T-cell (primary cell): ENCODE measurements at regions of chr1 and their contacts with region 1.

Region 1: DNA sequence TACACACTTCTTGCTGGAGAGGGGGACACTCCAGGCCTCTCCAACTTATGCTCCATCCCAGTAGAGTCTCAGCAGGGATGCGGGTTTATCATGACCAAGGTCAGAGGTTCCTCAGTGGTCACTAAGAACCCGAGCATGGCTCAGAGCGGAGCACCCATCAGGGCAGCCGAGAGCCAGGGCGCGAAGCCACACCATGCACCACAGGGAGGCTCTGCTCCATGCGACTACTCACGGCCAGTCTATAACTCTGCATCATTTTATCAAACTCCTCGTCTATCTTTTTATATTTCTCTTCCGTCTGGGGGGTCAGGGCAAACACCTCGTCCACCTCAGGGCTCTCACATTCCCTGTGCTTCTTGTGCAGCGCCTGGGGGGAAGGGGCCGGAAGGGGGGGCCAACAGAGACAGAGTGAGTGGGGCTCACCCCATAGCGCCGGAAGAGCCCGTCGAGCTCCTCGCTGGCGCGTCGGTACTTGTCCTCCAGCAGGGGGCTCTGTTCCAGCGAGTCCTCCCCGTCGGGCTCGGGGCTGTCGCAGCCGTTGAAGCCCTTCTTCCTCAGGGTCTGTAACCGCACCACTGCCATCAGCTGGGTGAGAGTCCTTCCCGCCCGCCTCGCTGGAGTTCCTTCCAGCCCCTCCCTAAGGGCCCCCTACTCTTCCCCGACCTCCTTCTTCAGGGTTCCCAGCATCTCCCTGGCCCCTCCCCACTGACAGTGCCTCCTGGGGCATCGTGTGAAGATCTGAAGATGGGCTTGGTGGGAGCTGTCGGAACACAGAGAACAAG is 20.0 kb downstream of the MEF2D start:
- DNase-seq: peak; percentile 58 to 87 (median 76)
- ATAC-seq: peak; percentile 80 to 87 (median 85)
- H3K4me3 ChIP-seq: no peak overlapping the region
- H3K4me3 Mint-ChIP-seq: peak overlapping the region in 1 of 3 donors; percentile 45
- H3K27ac ChIP-seq: peak overlapping the region; percentile 39
- H3K27ac Mint-ChIP-seq: peak overlapping the region; percentile 64 to 77
- H3K4me1 ChIP-seq: peaks cover 2 to 54% of the 10 kb centered on the region in 2 experiments
- H3K4me1 Mint-ChIP-seq: peaks cover 45 to 52% (median 51%) of the 10 kb centered on the region in 3 donors
- H3K27me3 ChIP-seq: no peaks in the 10 kb centered on the region
- H3K27me3 Mint-ChIP-seq: no peaks in the 10 kb centered on the region

Region 2: GRCh38 chr1:155504207-155504606 is 976.4 kb before region 1 on chr1:
- CTCF ChIA-PET with region 1: no interaction called
- POLR2A ChIA-PET with region 1: no interaction called
- DNase-seq: peak in 3 of 35 experiments; percentile 4 to 51 (median 7)
- ATAC-seq: peak in 1 of 4 experiments; percentile 45
- H3K4me3 ChIP-seq: no peak overlapping the region
- H3K4me3 Mint-ChIP-seq: no peak overlapping the region
- H3K27ac ChIP-seq: no peak overlapping the region
- H3K27ac Mint-ChIP-seq: peak overlapping the region in 1 of 2 donors; percentile 1
- H3K4me1 ChIP-seq: peaks cover 11% of the 10 kb centered on the region in 2 experiments
- H3K4me1 Mint-ChIP-seq: peaks cover 49 to 57% (median 52%) of the 10 kb centered on the region in 3 donors
- H3K27me3 ChIP-seq: no peaks in the 10 kb centered on the region
- H3K27me3 Mint-ChIP-seq: no peaks in the 10 kb centered on the region

Region 3: GRCh38 chr1:156456622-156457465 is 23.8 kb before region 1 on chr1:
- CTCF ChIA-PET with region 1: interaction called, 3 to 9 read pairs
- POLR2A ChIA-PET with region 1: interaction called in 1 of 2 experiments, 10 read pairs
- DNase-seq: peak; percentile 85 to 99 (median 96)
- ATAC-seq: peak; percentile 83 to 88 (median 85)
- H3K4me3 ChIP-seq: peak overlapping the region; percentile 74 to 77
- H3K4me3 Mint-ChIP-seq: peak overlapping the region; percentile 87 to 89 (median 88)
- H3K27ac ChIP-seq: peak overlapping the region; percentile 97
- H3K27ac Mint-ChIP-seq: peak overlapping the region; percentile 94 to 98
- H3K4me1 ChIP-seq: peaks cover 4 to 19% of the 10 kb centered on the region in 2 experiments
- H3K4me1 Mint-ChIP-seq: peaks cover 14 to 22% (median 19%) of the 10 kb centered on the region in 3 donors
- H3K27me3 ChIP-seq: no peaks in the 10 kb centered on the region
- H3K27me3 Mint-ChIP-seq: no peaks in the 10 kb centered on the region

Region 4: DNA sequence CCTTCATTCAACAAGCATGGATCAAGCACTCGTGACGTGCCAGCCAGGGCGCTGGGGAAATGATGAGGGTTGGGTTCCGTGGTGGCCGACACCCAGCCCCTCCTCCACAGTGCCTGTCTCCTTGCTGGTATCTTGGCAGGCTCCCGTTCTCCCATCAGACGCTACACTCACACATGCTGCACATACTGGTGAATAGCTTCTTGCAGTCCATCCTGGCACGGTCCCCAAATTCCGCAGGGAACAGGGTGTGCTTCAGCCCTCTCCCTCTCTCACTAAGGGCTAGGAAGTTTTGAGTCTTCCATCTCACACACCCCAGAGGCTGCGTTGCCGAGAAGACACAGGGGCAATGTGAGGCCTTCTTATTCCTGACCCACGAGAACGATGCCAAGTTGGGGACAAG is 30.1 kb after region 1 on chr1:
- CTCF ChIA-PET with region 1: interaction called, 6 to 13 read pairs
- POLR2A ChIA-PET with region 1: interaction called, 9 to 11 read pairs
- DNase-seq: no peak
- ATAC-seq: no peak
- H3K4me3 ChIP-seq: no peak overlapping the region
- H3K4me3 Mint-ChIP-seq: no peak overlapping the region
- H3K27ac ChIP-seq: no peak overlapping the region
- H3K27ac Mint-ChIP-seq: peak overlapping the region in 1 of 2 donors; percentile 22
- H3K4me1 ChIP-seq: peaks cover 18 to 26% of the 10 kb centered on the region in 2 experiments
- H3K4me1 Mint-ChIP-seq: peaks cover 30 to 37% (median 34%) of the 10 kb centered on the region in 3 donors
- H3K27me3 ChIP-seq: peaks cover 0 to 5% of the 10 kb centered on the region in 2 experiments
- H3K27me3 Mint-ChIP-seq: no peaks in the 10 kb centered on the region

Region 5: DNA sequence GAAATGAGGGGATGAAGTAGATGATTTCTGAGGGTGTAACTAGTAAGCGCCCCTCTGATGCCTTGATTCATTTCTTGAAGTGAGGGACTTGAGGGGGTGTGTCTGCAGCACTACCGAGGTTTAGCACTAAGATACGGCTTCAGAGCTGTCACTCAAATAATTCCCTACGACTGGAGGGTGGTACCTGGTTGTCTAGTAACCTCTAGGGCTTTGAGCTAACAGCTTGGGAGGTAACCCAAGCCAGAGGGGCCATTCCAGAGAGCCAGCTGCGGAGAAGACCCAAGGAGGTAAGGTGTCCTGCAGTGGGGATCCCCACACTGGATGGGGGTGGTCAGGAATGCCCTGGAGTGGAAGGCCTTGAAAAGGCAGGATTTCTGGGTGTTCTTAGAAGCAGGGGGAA is 98.9 kb after region 1 on chr1 and contains the start of gene TTC24:
- CTCF ChIA-PET with region 1: interaction called in 1 of 2 experiments, 10 read pairs
- POLR2A ChIA-PET with region 1: no interaction called
- DNase-seq: no peak
- ATAC-seq: no peak
- H3K4me3 ChIP-seq: no peak within 1 kb of the TSS
- H3K4me3 Mint-ChIP-seq: no peak within 1 kb of the TSS
- H3K27ac ChIP-seq: no peak within 1 kb of the TSS
- H3K27ac Mint-ChIP-seq: peak within 1 kb of the TSS in 1 of 2 donors; percentile 52
- H3K4me1 ChIP-seq: peaks cover 9 to 33% of the 10 kb centered on the region in 2 experiments
- H3K4me1 Mint-ChIP-seq: peaks cover 23 to 35% (median 23%) of the 10 kb centered on the region in 3 donors
- H3K27me3 ChIP-seq: peaks cover 0 to 4% of the 10 kb centered on the region in 2 experiments
- H3K27me3 Mint-ChIP-seq: peaks cover 4% of the 10 kb centered on the region in 2 donors
- total RNA-seq, gene TTC24: 9.9 to 43.6 (median 16.4) TPM

Region 6: DNA sequence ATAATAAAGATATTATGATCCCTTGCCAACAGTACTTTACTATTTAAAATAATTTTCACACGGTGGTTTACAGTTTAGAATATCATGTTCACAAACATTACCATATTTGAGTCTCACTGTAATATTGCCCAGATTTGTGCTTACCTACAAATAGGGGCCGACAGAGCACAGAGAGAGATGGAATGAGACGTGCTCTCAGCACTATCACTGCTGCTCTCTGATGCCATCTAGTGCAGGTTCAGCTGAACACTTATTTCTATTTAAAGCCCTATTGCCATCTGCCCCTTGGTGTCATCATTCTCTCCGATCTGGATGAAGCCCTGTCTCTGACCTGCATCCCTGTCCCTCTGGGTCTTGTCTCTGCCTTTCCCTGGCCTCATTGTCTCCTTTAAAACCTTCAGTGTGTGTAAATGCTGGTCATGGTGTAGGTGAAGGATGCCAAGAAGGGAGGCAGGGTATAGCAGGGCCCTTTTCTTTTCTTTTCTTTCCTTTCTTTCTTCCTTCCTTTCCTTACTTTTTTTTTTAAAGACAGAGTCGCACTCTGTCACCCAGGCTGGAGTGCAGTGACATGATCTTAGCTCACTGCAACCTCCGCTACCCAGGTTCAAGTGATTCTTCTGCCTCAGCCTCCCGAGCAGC is 127.6 kb after region 1 on chr1:
- CTCF ChIA-PET with region 1: interaction called, 4 to 11 read pairs
- POLR2A ChIA-PET with region 1: interaction called, 4 to 13 read pairs
- DNase-seq: peak in 33 of 35 experiments; percentile 29 to 87 (median 59)
- ATAC-seq: peak; percentile 86 to 95 (median 94)
- H3K4me3 ChIP-seq: no peak overlapping the region
- H3K4me3 Mint-ChIP-seq: no peak overlapping the region
- H3K27ac ChIP-seq: no peak overlapping the region
- H3K27ac Mint-ChIP-seq: no peak overlapping the region
- H3K4me1 ChIP-seq: peaks cover 0 to 8% of the 10 kb centered on the region in 2 experiments
- H3K4me1 Mint-ChIP-seq: peaks cover 9 to 15% (median 11%) of the 10 kb centered on the region in 3 donors
- H3K27me3 ChIP-seq: peaks cover 0 to 21% of the 10 kb centered on the region in 2 experiments
- H3K27me3 Mint-ChIP-seq: peaks cover 10 to 16% of the 10 kb centered on the region in 2 donors